ENCODE measurements at regions of chr1 and their contacts with region 1.

Region 1: DNA sequence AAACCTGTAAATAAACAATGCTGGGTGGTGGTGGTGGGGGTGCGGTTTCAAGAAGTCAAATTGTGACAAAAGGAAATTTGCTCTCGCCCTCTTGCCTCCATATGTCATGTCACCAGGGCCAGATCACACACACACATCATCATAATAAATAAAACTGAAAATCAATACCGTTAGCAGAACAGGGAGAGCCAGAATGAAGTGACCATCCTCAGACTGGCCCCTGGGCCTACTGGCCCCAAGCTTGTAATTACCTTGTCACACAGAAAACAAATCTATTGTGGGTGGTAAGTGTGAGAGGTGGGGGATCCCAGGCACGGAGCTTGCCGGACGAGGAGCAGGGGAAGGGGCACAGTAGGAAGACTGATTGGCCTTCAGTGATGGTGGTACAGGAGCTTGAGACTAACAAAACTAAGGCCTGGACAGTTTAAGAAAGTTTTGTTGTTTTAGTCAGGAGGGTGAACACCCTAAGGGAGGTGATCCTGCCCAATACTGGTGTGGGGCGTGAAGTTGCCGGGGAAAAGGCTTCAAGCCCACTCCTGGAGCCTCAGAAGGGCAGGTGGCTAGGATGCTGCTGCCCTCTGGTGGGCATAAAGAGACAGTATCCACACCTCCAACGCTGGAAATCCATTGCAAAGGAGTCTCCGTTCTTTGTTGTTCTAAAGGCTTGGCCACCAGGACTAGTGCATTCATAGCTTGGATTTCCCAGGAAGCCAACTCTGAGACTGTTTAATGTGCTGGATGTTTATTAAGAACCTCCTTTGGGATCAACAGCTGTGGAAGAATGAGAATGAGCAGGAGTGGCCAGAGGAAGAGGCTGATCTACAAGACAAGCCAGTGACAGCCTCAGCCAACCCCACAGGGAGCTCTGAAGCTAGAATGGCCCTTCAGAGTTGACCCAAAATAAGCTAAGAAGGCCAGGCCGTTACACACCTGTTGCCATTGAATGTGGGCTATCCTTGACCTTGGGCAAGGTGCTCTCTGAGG is 8.1 kb upstream of the C1orf216 start:
- DNase-seq: peak; percentile 41 to 48
- H3K4me3 ChIP-seq: no peak overlapping the region
- H3K4me3 Mint-ChIP-seq: no peak overlapping the region
- H3K27ac Mint-ChIP-seq: no peak overlapping the region
- H3K4me1 ChIP-seq: no peaks in the 10 kb centered on the region
- H3K4me1 Mint-ChIP-seq: no peaks in the 10 kb centered on the region
- H3K27me3 ChIP-seq: no peaks in the 10 kb centered on the region
- H3K27me3 Mint-ChIP-seq: no peaks in the 10 kb centered on the region
- CTCF ChIP-seq: peak; percentile 45 to 62

Region 2: GRCh38 chr1:35769188-35769758 is 42.5 kb after region 1 on chr1:
- CTCF ChIA-PET with region 1: no interaction called
- POLR2A ChIA-PET with region 1: no interaction called
- intact Hi-C with region 1: loop called (anchors 2 kb)
- DNase-seq: peak; percentile 82 to 84
- H3K4me3 ChIP-seq: peak overlapping the region; percentile 77
- H3K4me3 Mint-ChIP-seq: peak overlapping the region; percentile 98
- H3K27ac Mint-ChIP-seq: peak overlapping the region; percentile 92
- H3K4me1 ChIP-seq: no peaks in the 10 kb centered on the region
- H3K4me1 Mint-ChIP-seq: no peaks in the 10 kb centered on the region
- H3K27me3 ChIP-seq: no peaks in the 10 kb centered on the region
- H3K27me3 Mint-ChIP-seq: no peaks in the 10 kb centered on the region
- CTCF ChIP-seq: no peak

Measured in Caco-2 (cell line).